ENCODE measurements at regions of chr3 and their contacts with region 1.

Region 1: GRCh38 chr3:14651440-14652251 is at the start of gene CCDC174:
- DNase-seq: peak; percentile 99
- ATAC-seq: peak; percentile 95
- H3K4me3 ChIP-seq: peak within 1 kb of the TSS; percentile 80 to 95 (median 93)
- H3K27ac ChIP-seq: peak within 1 kb of the TSS; percentile 80
- H3K4me1 ChIP-seq: peaks cover 43% of the 10 kb centered on the region
- H3K27me3 ChIP-seq: peaks cover 0 to 8% of the 10 kb centered on the region in 2 experiments; a peak in 1 of 5 replicates
- CTCF ChIP-seq: peak; percentile 30
- EP300 ChIP-seq: no peak
- POLR2A ChIP-seq: peak; percentile 95 to 98
- RAD21 ChIP-seq: no peak; the same call in 1 of the 2 replicates
- total RNA-seq, gene CCDC174: 11.0 and 12.4 TPM in 2 replicates

Region 2: DNA sequence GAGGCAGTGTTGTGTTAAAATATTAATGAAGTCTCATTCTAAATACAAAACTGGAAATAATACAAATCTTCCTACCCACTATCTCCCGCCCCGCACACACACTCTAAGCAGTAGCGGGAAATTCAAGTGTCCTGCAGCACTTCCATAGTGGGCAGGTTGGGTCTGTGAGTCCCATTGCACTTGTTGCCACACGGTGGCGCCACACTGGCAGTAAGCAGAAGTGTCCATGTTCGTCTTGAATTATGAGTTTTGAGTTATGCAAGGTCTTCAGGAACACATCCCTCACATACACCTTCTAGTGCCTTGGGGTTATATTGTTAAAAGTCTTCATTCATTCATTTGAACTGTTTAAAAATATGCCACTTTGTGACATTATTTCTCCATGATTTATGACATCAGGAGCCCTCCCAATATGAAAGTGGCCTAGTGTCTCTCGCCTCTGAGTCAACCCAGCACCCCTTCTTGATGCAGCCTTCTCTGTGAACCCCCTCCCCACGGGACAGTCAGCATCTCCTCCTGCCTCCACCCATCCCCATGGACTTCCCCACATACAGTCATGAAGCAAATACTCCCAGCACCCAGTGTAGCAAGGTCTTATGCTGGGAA is 17.7 kb before region 1 on chr3:
- CTCF ChIA-PET with region 1: no interaction called
- POLR2A ChIA-PET with region 1: interaction called, 18 read pairs
- in situ Hi-C with region 1: no loop called
- intact Hi-C with region 1: no loop called
- DNase-seq: peak; percentile 53
- ATAC-seq: peak; percentile 58
- H3K4me3 ChIP-seq: no peak overlapping the region
- H3K27ac ChIP-seq: no peak overlapping the region
- H3K4me1 ChIP-seq: peaks cover 57% of the 10 kb centered on the region
- H3K27me3 ChIP-seq: peaks cover 0 to 3% of the 10 kb centered on the region in 2 experiments; a peak in 1 of 5 replicates
- CTCF ChIP-seq: peak; percentile 72
- EP300 ChIP-seq: no peak
- POLR2A ChIP-seq: no peak
- RAD21 ChIP-seq: no peak

Region 3: GRCh38 chr3:14678015-14678503 is 26.4 kb after region 1 on chr3:
- CTCF ChIA-PET with region 1: no interaction called
- POLR2A ChIA-PET with region 1: interaction called, 16 read pairs
- in situ Hi-C with region 1: no loop called
- intact Hi-C with region 1: no loop called
- DNase-seq: peak; percentile 96
- ATAC-seq: peak; percentile 96
- H3K4me3 ChIP-seq: 0 out of 6 replicates have a peak overlapping the region, but pooled peaks of 1 of the 3 experiments have one; percentile 17
- H3K27ac ChIP-seq: peak overlapping the region; percentile 82
- H3K4me1 ChIP-seq: peaks cover 59% of the 10 kb centered on the region
- H3K27me3 ChIP-seq: no peaks in the 10 kb centered on the region
- CTCF ChIP-seq: peak; percentile 20; the same call in 1 of the 2 replicates
- EP300 ChIP-seq: peak; percentile 73 to 91; a peak in 3 of 4 replicates
- POLR2A ChIP-seq: no peak
- RAD21 ChIP-seq: peak; percentile 28; the same call in 1 of the 2 replicates